Activated T-helper 2 cell treated with anti-CD3 and anti-CD28 coated beads, Interferon-gamma antibody, Interleukin-2, Interleukin-4, amounts not matched to agents 10 μg/mL and 5 μg/mL and 100 μg/mL, durations not matched to agents 14 hours and 24 hours and 36 hours (primary cell): ENCODE measurements at regions of chr20 and their contacts with region 1.

Region 1: GRCh38 chr20:31849455-31849925 is 4.1 kb upstream of the FOXS1 start:
- DNase-seq: no peak
- H3K4me3 Mint-ChIP-seq: no peak overlapping the region
- H3K27ac Mint-ChIP-seq: no peak overlapping the region
- H3K4me1 Mint-ChIP-seq: no peaks in the 10 kb centered on the region
- H3K27me3 Mint-ChIP-seq: peaks cover 11% of the 10 kb centered on the region

Region 2: DNA sequence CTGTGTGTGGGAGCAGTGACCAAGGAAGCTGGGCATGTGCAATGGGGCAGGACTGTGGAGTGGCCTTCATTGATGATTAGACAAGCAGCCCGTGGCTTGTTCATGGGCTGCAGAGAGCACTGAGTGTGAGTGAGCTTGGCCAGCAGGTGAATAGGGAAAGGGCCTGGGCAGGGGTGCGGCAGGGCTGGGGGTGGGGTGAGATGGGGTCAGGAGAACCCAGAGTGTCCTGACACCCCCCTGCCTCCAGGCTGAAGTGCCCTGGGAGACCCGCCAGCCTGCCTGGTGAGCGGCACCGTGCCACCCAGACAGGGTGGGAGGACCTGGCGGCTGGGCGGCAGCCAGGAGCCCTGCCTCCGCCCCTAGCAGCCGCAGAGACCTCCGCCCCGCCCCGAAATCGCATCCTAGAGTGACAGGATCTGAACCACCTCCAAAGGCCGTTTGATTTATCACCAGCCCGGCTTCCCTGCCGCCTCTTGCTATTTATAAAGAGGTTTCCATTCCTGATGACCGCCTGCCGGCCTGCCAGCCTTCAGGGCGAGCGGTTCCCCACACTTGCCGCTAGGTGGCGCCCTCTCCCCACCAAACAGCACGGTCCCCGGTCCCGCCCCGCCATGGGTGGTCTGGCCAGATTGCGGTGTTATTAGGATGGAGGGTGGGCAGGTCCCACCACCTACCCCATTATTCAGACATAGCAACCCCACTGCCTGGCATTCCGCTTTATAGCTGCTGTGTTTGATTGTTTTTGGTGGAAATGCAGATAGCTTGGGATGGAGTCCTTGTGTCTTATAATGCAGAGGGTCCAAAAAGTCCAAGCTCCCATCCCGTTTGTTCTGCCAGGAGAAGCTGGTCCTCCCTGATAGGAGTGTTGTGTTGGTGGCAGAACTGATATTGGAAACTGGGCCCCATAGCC is 26.8 kb before region 1 on chr20:
- intact Hi-C with region 1: loop called (anchors 2 kb)
- DNase-seq: peak; percentile 63
- H3K4me3 Mint-ChIP-seq: no peak overlapping the region
- H3K27ac Mint-ChIP-seq: no peak overlapping the region
- H3K4me1 Mint-ChIP-seq: peaks cover 5% of the 10 kb centered on the region
- H3K27me3 Mint-ChIP-seq: no peaks in the 10 kb centered on the region

Region 3: GRCh38 chr20:31951530-31952453 is 102.3 kb after region 1 on chr20 and contains the start of gene PDRG1:
- intact Hi-C with region 1: loop called (anchors 1 kb)
- DNase-seq: peak; percentile 95
- H3K4me3 Mint-ChIP-seq: peak within 1 kb of the TSS; percentile 86
- H3K27ac Mint-ChIP-seq: peak within 1 kb of the TSS; percentile 95
- H3K4me1 Mint-ChIP-seq: peaks cover 19% of the 10 kb centered on the region
- H3K27me3 Mint-ChIP-seq: peaks cover 7% of the 10 kb centered on the region
- total RNA-seq, gene PDRG1: 15.5 and 16.4 TPM in 2 replicates

Region 4: DNA sequence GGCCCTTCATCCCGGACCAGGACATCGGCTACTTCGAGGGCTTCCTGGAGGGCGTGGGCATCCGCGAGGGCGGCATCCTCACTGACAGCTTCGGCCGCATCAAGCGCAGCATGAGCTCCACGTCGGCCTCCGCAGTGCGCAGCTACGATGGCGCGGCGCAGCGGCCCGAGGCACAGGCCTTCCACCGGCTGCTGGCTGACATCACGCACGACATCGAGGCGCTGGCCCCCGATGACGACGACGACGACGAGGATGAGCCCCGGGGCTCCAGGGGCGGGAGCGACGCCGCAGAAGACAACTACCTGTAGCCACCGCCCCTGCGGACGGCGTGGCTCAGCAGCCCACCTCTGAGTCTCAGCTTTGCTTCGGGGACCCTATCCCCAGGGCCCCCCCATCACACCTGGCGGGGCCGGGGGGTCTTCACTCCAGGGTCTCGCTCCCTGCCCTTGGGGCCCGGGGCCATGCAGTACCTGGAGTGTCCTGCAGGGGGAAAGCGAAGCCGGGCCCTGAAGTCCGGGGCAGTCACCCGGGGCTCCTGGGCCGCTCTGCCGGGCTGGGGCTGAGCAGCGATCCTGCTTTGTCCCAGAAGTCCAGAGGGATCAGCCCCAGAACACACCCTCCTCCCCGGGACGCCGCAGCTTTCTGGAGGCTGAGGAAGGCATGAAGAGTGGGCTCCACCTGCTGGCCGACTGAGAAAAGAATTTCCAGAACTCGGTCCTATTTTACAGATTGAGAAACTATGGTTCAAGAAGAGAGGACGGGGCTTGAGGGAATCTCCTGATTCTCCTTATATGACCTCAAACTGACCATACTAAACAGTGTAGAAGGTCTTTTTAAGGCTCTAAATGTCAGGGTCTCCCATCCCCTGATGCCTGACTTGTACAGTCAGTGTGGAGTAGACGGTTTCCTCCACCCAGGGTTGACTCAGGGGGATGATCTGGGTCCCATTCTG is 181.8 kb after region 1 on chr20:
- intact Hi-C with region 1: loop called (anchors 2 kb)
- DNase-seq: peak; percentile 28
- H3K4me3 Mint-ChIP-seq: no peak overlapping the region
- H3K27ac Mint-ChIP-seq: no peak overlapping the region
- H3K4me1 Mint-ChIP-seq: peaks cover 3% of the 10 kb centered on the region
- H3K27me3 Mint-ChIP-seq: peaks cover 43% of the 10 kb centered on the region

Region 5: DNA sequence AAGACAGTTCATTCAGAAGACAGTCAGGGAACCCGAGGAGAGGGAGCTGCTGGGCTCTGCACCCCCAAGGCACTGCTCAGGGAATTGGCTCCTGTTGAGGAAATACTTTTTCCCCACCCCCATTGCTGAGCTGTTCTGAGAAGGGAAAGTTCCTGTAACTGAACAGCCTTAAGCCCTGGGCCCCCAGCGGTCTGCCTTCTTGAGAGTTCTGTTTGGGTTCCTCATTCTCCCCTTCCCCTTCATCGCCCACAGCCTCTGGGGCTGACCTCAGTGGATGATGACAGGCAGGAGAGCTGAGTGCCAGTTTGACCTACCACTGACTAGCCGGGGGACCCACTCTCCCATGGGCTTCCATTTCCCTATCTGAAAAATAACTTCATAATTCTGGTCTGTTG is 213.3 kb after region 1 on chr20:
- intact Hi-C with region 1: no loop called
- DNase-seq: no peak
- H3K4me3 Mint-ChIP-seq: no peak overlapping the region
- H3K27ac Mint-ChIP-seq: no peak overlapping the region
- H3K4me1 Mint-ChIP-seq: peaks cover 12% of the 10 kb centered on the region
- H3K27me3 Mint-ChIP-seq: peaks cover 22% of the 10 kb centered on the region

Region 6: DNA sequence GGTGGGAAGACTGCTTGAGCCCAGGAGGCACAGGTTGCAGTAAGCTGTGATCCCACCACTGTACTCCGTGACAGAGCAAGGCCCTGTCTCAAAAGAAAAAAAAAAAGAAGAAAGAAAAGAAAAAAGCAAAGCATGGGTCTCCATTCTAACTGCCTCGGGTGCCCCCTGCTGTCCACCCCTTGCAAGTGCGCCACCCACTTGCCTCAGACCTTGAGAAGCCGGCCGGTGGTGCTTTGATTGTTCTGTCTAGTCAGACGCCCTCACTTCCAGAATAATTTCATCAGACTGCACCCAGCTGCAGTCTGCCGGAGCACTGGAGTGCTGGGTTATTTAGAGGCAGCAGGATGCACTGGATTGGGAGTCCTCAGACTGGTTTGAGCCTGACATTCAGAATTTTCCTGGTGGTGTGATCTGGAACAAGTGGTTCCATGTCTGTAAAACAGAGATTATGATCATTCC is 242.4 kb after region 1 on chr20:
- intact Hi-C with region 1: loop called (anchors 5 kb)
- DNase-seq: peak; percentile 63
- H3K4me3 Mint-ChIP-seq: no peak overlapping the region
- H3K27ac Mint-ChIP-seq: no peak overlapping the region
- H3K4me1 Mint-ChIP-seq: peaks cover 2% of the 10 kb centered on the region
- H3K27me3 Mint-ChIP-seq: peaks cover 19% of the 10 kb centered on the region